ENCODE measurements at regions of chr17 and their contacts with region 1.

Region 1: GRCh38 chr17:43024407-43025289 is at the start of gene RND2:
- DNase-seq: peak; percentile 93 to 94 (median 93)
- ATAC-seq: peak; percentile 69 to 74
- H3K4me3 ChIP-seq: peak within 1 kb of the TSS; percentile 58
- H3K27ac ChIP-seq: peak within 1 kb of the TSS; percentile 21
- H3K4me1 ChIP-seq: no peaks in the 10 kb centered on the region
- H3K27me3 ChIP-seq: no peaks in the 10 kb centered on the region
- total RNA-seq, gene RND2: 2.9 to 5.3 (median 4.2) TPM

Region 2: DNA sequence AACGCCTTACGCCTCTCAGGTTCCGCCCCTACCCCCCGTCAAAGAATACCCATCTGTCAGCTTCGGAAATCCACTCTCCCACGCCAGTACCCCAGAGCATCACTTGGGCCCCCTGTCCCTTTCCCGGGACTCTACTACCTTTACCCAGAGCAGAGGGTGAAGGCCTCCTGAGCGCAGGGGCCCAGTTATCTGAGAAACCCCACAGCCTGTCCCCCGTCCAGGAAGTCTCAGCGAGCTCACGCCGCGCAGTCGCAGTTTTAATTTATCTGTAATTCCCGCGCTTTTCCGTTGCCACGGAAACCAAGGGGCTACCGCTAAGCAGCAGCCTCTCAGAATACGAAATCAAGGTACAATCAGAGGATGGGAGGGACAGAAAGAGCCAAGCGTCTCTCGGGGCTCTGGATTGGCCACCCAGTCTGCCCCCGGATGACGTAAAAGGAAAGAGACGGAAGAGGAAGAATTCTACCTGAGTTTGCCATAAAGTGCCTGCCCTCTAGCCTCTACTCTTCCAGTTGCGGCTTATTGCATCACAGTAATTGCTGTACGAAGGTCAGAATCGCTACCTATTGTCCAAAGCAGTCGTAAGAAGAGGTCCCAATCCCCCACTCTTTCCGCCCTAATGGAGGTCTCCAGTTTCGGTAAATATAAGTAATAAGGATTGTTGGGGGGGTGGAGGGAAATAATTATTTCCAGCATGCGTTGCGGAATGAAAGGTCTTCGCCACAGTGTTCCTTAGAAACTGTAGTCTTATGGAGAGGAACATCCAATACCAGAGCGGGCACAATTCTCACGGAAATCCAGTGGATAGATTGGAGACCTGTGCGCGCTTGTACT is 100.7 kb after region 1 on chr17 and contains the start of gene BRCA1:
- intact Hi-C with region 1: loop called in 2 of 4 experiments (anchors 10 kb)
- DNase-seq: peak; percentile 91 to 96 (median 93)
- ATAC-seq: peak; percentile 99 to 100
- H3K4me3 ChIP-seq: peak within 1 kb of the TSS; percentile 78
- H3K27ac ChIP-seq: peak within 1 kb of the TSS; percentile 94
- H3K4me1 ChIP-seq: no peaks in the 10 kb centered on the region
- H3K27me3 ChIP-seq: no peaks in the 10 kb centered on the region
- total RNA-seq, gene BRCA1: 4.3 to 10.9 (median 8.0) TPM

Region 3: DNA sequence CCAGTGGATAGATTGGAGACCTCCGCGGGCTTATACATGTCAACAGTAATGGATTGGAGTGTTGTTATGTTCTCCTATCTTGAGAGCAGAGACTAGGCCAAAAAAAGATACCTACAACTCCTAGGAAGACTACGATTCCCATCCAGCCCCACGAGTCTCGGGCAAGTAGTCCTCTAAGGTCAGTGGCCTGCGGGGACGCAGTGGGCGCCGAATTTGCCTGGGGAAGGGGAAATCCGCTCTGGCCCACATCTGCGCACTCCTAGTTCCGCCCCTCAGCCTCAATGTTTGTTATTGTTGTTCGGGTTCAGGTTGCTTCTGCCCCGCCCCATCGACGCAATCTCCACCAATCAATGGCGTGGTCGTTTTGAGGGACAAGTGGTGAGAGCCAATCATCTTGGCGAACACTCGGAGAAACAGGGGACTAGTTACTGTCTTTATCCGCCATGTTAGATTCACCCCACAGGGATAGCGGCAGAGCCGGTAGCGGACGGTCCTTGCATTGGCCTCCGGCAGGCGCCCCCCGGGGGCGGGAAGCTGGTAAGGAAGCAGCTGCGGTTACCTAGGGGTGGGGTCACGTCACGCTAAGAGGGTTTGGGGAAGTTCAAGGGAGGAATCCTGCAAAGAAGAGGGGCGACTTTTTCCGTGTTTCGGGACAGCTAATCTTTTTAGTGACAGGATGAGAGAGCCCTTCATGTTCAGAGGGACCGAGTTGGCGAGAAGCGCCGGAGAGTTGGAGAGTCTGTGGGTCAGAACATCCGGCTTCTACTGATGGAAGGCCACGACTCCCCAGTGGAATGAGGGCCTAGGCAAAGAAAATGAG is 146.3 kb after region 1 on chr17 and contains the start of gene NBR1:
- intact Hi-C with region 1: loop called in 1 of 4 experiments (anchors 10 kb)
- DNase-seq: peak; percentile 92 to 97 (median 96)
- ATAC-seq: peak; percentile 94 to 95
- H3K4me3 ChIP-seq: peak within 1 kb of the TSS; percentile 91
- H3K27ac ChIP-seq: peak within 1 kb of the TSS; percentile 100
- H3K4me1 ChIP-seq: no peaks in the 10 kb centered on the region
- H3K27me3 ChIP-seq: no peaks in the 10 kb centered on the region
- total RNA-seq, gene NBR1: 83.7 to 98.2 (median 90.9) TPM

Region 4: DNA sequence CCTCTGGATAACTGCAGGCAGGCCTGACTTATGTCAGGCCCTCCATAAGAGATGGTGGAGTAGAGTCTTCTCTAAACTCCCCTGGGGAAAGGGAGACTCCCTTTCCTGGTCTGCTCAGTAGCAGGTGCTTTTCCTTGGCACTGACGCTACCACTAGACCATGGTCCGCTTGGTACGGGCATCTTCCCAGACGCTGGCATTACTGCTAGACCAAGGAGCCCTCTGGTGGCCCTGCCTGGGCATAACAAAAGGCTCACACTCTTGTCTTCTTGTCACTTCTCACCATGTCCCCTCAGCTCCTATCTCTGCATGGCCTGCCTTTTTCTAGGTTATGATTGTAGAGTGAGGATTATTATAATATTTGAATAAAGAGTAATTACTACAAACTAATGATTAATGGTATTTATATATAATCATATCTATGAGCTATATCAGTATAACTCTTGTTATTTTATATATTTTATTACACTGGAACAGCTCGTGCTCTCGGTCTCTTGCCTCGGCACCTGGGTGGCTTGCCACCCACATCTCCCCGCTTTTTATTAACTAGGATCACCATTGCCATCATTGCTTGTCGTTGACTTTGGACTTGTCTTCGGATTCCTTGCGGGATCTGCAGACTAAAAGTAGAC is 314.4 kb after region 1 on chr17:
- intact Hi-C with region 1: loop called in 1 of 4 experiments (anchors 5 kb)
- DNase-seq: peak; percentile 68 to 88 (median 85)
- ATAC-seq: no peak
- H3K4me3 ChIP-seq: no peak overlapping the region
- H3K27ac ChIP-seq: no peak overlapping the region
- H3K4me1 ChIP-seq: no peaks in the 10 kb centered on the region
- H3K27me3 ChIP-seq: no peaks in the 10 kb centered on the region

Measured in right cardiac atrium (tissue), 5 donors.